A549 (cell line): ENCODE measurements at regions of chr4 and their contacts with region 1.

Region 1: DNA sequence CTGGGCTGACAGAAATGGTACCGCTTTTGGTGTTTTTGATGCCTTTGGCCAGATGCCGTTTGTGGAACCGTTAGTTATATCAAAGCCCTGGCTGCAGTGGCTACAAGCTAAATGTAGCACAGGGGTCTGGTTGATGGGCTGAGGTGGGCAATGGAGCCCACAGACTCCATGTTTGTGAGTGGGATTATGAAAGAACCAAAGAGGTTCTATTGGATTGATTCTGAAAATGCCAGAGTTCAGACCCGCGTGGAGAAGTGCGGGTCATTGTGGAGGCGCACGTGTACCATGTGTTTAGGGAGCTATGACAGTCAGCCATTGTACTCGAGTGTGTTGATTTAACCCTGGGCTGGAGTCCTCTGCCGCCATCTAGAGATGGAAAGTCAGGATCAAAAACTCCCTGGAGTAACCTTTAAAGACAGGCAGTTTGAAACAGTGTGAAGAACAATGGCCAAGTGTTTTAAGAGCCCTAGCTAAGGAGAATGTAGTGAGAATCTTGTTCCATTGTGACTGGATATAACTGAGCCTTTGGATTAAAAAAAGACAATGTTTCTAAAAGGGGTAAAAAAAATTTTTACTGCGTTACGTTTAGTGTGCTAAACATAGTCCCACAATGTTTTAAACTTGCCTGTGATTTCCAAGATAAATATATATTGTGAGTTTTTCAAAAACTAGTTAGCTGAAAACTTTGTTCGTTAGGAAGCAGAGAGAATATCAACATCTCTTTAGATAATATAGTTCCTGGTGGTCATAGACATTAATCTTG is 12.7 kb downstream of the ART3 start:
- DNase-seq: peak; percentile 56 to 64
- ATAC-seq: peak; percentile 97 to 98
- H3K4me3 ChIP-seq: 0 out of 3 replicates have a peak overlapping the region, but pooled peaks have one; percentile 20
- H3K27ac ChIP-seq: peak overlapping the region in 1 of 2 experiments; percentile 48; a peak in 1 of 6 replicates
- H3K4me1 ChIP-seq: no peaks in the 10 kb centered on the region
- CTCF ChIP-seq: peak; percentile 48
- EP300 ChIP-seq: no peak
- POLR2A ChIP-seq: no peak
- RAD21 ChIP-seq: peak; percentile 53 to 68

Region 2: DNA sequence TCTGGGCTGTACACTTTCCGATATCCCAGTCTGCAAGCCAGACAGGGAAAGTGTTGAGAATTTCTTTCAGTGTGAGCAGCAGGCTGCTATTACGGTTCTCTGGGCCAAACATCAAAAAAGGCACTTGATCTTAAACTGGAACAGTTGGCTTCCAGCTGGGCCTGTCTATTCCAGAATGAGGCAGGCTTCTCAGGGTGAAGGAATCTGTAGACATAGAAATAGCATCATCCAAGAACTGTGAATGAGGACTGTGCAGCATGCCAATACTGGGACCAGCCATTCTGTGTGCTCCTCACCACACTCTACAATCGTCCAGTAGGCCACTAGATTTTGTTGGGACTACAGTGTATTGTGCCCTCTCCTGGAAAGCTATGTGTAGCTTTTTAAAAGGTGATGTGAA is 18.5 kb after region 1 on chr4:
- CTCF ChIA-PET with region 1: interaction called, 11 read pairs
- POLR2A ChIA-PET with region 1: no interaction called
- DNase-seq: no peak
- ATAC-seq: peak in 1 of 2 experiments; percentile 54; a peak in 3 of 6 replicates
- H3K4me3 ChIP-seq: no peak overlapping the region
- H3K27ac ChIP-seq: no peak overlapping the region
- H3K4me1 ChIP-seq: no peaks in the 10 kb centered on the region
- CTCF ChIP-seq: no peak
- EP300 ChIP-seq: no peak
- POLR2A ChIP-seq: no peak
- RAD21 ChIP-seq: no peak